Endothelial cell of umbilical vein (primary cell): ENCODE measurements at regions of chr4 and their contacts with region 1.

Region 1: GRCh38 chr4:183471946-183472708 is 27.7 kb downstream of the CDKN2AIP start:
- DNase-seq: peak; percentile 76
- H3K4me3 ChIP-seq: no peak overlapping the region
- H3K27ac ChIP-seq: no peak overlapping the region
- H3K4me1 ChIP-seq: no peaks in the 10 kb centered on the region
- H3K27me3 ChIP-seq: no peaks in the 10 kb centered on the region
- CTCF ChIP-seq: peak; percentile 70 to 80
- POLR2A ChIP-seq: no peak

Region 2: GRCh38 chr4:183602557-183603027 is 130.5 kb after region 1 on chr4:
- CTCF ChIA-PET with region 1: interaction called, 45 read pairs
- POLR2A ChIA-PET with region 1: no interaction called
- dilution Hi-C with region 1: no loop called
- intact Hi-C with region 1: loop called (anchors 1 kb)
- DNase-seq: peak; percentile 8
- H3K4me3 ChIP-seq: no peak overlapping the region
- H3K27ac ChIP-seq: no peak overlapping the region
- H3K4me1 ChIP-seq: no peaks in the 10 kb centered on the region
- H3K27me3 ChIP-seq: peaks cover 0 to 6% of the 10 kb centered on the region in 2 experiments
- CTCF ChIP-seq: no peak
- POLR2A ChIP-seq: no peak

Region 3: GRCh38 chr4:183674153-183674552 is 202.0 kb after region 1 on chr4:
- CTCF ChIA-PET with region 1: no interaction called
- POLR2A ChIA-PET with region 1: no interaction called
- dilution Hi-C with region 1: no loop called
- intact Hi-C with region 1: loop called (anchors 5 kb)
- DNase-seq: no peak
- H3K4me3 ChIP-seq: no peak overlapping the region
- H3K27ac ChIP-seq: no peak overlapping the region
- H3K4me1 ChIP-seq: no peaks in the 10 kb centered on the region
- H3K27me3 ChIP-seq: no peaks in the 10 kb centered on the region
- CTCF ChIP-seq: no peak
- POLR2A ChIP-seq: no peak

Region 4: GRCh38 chr4:183840311-183840710 is 368.2 kb after region 1 on chr4:
- CTCF ChIA-PET with region 1: no interaction called
- POLR2A ChIA-PET with region 1: no interaction called
- dilution Hi-C with region 1: no loop called
- intact Hi-C with region 1: loop called (anchors 10 kb)
- DNase-seq: peak; percentile 67
- H3K4me3 ChIP-seq: no peak overlapping the region
- H3K27ac ChIP-seq: no peak overlapping the region
- H3K4me1 ChIP-seq: no peaks in the 10 kb centered on the region
- H3K27me3 ChIP-seq: peaks cover 0 to 1% of the 10 kb centered on the region in 2 experiments
- CTCF ChIP-seq: peak; percentile 77 to 80
- POLR2A ChIP-seq: no peak